ENCODE measurements at regions of chr5 and their contacts with region 1.

Region 1: DNA sequence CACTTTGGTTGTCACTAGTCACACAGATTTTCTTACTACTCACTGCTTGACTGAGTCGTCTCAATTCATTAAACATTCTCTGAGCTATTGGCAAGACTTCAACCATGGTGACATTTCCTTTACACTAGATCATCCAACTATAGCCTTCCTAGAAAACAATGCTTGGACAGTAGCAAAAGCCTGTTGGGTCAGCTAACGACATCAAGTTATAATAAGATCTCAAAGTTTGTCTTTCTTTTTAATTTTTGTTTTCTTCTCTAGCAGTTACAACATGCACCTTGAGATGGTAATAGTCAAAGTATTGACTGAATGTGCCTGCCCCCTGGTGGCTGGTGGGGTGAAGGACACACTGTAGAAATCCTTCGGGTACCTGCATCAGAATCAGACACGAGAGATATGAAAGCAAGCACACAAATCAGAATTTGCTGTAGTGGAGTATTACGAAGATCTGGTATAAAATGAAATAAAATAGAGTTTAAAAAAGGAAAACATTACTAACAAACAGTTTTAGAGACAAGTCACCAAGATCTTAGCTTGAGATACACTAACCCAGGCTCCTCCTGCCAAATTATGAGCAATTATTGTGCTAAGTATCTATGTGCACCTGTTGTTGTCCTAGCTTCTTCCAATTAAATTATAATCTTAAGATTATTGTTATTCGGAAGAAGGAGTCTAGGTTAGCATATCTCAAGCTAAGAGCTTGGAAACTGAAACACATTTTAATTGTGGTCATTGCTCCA is 81.2 kb downstream of the ARL15 start:
- DNase-seq: peak; percentile 82
- ATAC-seq: peak; percentile 71
- H3K4me3 Mint-ChIP-seq: no peak overlapping the region
- H3K27ac Mint-ChIP-seq: no peak overlapping the region
- H3K4me1 Mint-ChIP-seq: peaks cover 2% of the 10 kb centered on the region
- H3K27me3 Mint-ChIP-seq: peaks cover 2% of the 10 kb centered on the region

Region 2: GRCh38 chr5:53478411-53479044 is 750.7 kb before region 1 on chr5:
- CTCF ChIA-PET with region 1: interaction called, 20 read pairs
- DNase-seq: no peak
- ATAC-seq: no peak
- H3K4me3 Mint-ChIP-seq: peak overlapping the region; percentile 53
- H3K27ac Mint-ChIP-seq: no peak overlapping the region
- H3K4me1 Mint-ChIP-seq: peaks cover 30% of the 10 kb centered on the region
- H3K27me3 Mint-ChIP-seq: peaks cover 75% of the 10 kb centered on the region

Region 3: GRCh38 chr5:54317511-54318260 is 88.5 kb after region 1 on chr5:
- CTCF ChIA-PET with region 1: no interaction called
- DNase-seq: no peak
- ATAC-seq: no peak
- H3K4me3 Mint-ChIP-seq: no peak overlapping the region
- H3K27ac Mint-ChIP-seq: no peak overlapping the region
- H3K4me1 Mint-ChIP-seq: peaks cover 4% of the 10 kb centered on the region
- H3K27me3 Mint-ChIP-seq: peaks cover 59% of the 10 kb centered on the region